ENCODE measurements at regions of chr1 and their contacts with region 1.

Region 1: GRCh38 chr1:183281553-183282091 is 95.6 kb downstream of the LAMC2 start:
- DNase-seq: peak; percentile 74
- ATAC-seq: peak; percentile 79
- H3K4me3 ChIP-seq: no peak overlapping the region
- H3K4me3 Mint-ChIP-seq: no peak overlapping the region
- H3K27ac ChIP-seq: no peak overlapping the region
- H3K27ac Mint-ChIP-seq: no peak overlapping the region
- H3K4me1 ChIP-seq: no peaks in the 10 kb centered on the region
- H3K4me1 Mint-ChIP-seq: no peaks in the 10 kb centered on the region
- H3K27me3 ChIP-seq: peaks cover 0 to 4% (median 0%) of the 10 kb centered on the region in 4 experiments
- H3K27me3 Mint-ChIP-seq: peaks cover 21% of the 10 kb centered on the region
- CTCF ChIP-seq: peak; percentile 86

Region 2: GRCh38 chr1:183543619-183544204 is 262.1 kb after region 1 on chr1:
- CTCF ChIA-PET with region 1: no interaction called
- POLR2A ChIA-PET with region 1: no interaction called
- intact Hi-C with region 1: loop called (anchors 1 kb)
- DNase-seq: peak; percentile 59
- ATAC-seq: peak; percentile 63
- H3K4me3 ChIP-seq: no peak overlapping the region
- H3K4me3 Mint-ChIP-seq: no peak overlapping the region
- H3K27ac ChIP-seq: no peak overlapping the region
- H3K27ac Mint-ChIP-seq: no peak overlapping the region
- H3K4me1 ChIP-seq: peaks cover 4 to 5% of the 10 kb centered on the region in 2 donors
- H3K4me1 Mint-ChIP-seq: peaks cover 22% of the 10 kb centered on the region
- H3K27me3 ChIP-seq: no peaks in the 10 kb centered on the region
- H3K27me3 Mint-ChIP-seq: no peaks in the 10 kb centered on the region
- CTCF ChIP-seq: peak; percentile 67

Region 3: DNA sequence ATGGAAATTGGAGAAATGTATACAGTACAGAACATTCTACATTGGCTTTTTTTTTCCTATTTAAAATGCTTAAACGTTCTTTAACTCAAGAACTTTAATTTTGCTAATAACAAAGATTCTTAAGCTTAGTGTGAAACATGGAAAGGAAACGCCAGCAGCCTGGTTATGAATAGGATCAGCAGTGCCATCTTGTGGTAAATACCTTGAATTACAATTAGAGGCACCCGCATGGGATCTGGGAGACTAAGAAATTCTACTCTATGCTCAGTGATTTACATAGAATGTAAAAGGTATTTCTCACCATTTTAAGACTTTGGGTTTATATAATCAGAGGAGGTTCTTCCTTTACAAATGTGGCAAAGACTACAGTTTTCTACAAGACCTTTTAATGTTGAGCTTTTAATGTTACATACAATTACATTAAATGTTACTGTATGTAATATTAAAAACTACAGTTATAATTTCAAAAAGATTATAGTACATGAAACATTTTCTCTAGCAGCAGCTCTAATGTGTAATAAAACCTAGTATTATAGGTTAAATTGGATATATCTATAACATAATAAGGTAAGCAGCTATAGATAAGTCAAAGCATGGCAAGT is 403.6 kb after region 1 on chr1:
- CTCF ChIA-PET with region 1: interaction called, 21 read pairs
- POLR2A ChIA-PET with region 1: no interaction called
- intact Hi-C with region 1: no loop called
- DNase-seq: peak; percentile 62
- ATAC-seq: peak; percentile 36
- H3K4me3 ChIP-seq: no peak overlapping the region
- H3K4me3 Mint-ChIP-seq: no peak overlapping the region
- H3K27ac ChIP-seq: no peak overlapping the region
- H3K27ac Mint-ChIP-seq: no peak overlapping the region
- H3K4me1 ChIP-seq: no peaks in the 10 kb centered on the region
- H3K4me1 Mint-ChIP-seq: no peaks in the 10 kb centered on the region
- H3K27me3 ChIP-seq: no peaks in the 10 kb centered on the region
- H3K27me3 Mint-ChIP-seq: peaks cover 15% of the 10 kb centered on the region
- CTCF ChIP-seq: peak; percentile 92